Mucosa of descending colon (tissue), 3 donors: ENCODE measurements at regions of chr20 and their contacts with region 1.

Region 1: GRCh38 chr20:33862709-33863403 is 51.7 kb downstream of the CHMP4B start:
- DNase-seq: peak in 2 of 3 donors; percentile 62 to 71
- ATAC-seq: peak; percentile 62
- H3K4me3 ChIP-seq: no peak overlapping the region
- H3K4me1 ChIP-seq: peaks cover 6% of the 10 kb centered on the region
- CTCF ChIP-seq: peak; percentile 59

Region 2: DNA sequence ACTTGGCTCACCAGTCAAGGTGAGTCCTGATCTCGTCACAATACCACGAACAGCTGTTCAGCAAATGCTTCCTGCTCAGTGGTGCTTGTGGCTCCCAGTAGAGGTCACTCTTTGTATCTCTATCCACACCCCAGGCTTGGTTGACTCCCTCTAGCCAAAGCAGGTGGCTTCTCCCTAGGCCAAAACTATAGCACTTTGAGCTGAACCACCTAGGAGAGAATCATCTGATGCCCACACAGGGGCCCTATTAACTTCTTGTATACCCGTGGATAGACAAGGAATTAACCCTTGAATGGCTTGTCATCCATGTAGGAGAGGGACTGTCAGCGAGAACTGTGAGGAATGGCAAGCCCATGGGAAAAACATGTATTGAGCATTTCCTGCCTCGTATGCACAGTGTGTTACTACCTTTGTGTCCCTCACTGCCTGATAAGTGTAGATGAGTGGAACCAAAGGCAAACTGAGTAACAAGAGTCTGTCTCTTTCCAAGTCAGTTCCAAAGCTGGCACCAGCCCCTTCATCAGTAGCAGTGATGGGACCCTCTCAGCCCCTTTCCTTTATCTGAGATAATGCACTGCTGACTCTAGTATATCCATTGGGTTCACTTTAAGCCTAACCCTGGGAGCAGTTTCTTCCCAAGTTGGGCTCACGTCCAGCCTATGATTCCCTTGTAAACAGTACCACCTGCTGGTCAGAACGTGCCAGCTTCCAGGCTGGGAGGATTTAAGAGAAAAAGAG is 206.7 kb after region 1 on chr20:
- intact Hi-C with region 1: loop called in 1 of 2 experiments (anchors 10 kb)
- DNase-seq: peak in 2 of 3 donors; percentile 77 to 86
- ATAC-seq: peak; percentile 92
- H3K4me3 ChIP-seq: no peak overlapping the region
- H3K4me1 ChIP-seq: peaks cover 17% of the 10 kb centered on the region
- CTCF ChIP-seq: peak; percentile 72

Region 3: GRCh38 chr20:34129518-34130162 is 266.8 kb after region 1 on chr20:
- intact Hi-C with region 1: loop called in 1 of 2 experiments (anchors 5 kb)
- DNase-seq: peak in 2 of 3 donors; percentile 49 to 79
- ATAC-seq: peak; percentile 95
- H3K4me3 ChIP-seq: no peak overlapping the region
- H3K4me1 ChIP-seq: no peaks in the 10 kb centered on the region
- CTCF ChIP-seq: peak; percentile 58